HepG2 (cell line): ENCODE measurements at regions of chr1 and their contacts with region 1.

Region 1: GRCh38 chr1:37931361-37932158 is 15.3 kb downstream of the INPP5B start:
- DNase-seq: peak; percentile 95
- ATAC-seq: peak; percentile 99
- H3K4me3 ChIP-seq: peak overlapping the region; percentile 84 to 90 (median 88)
- H3K27ac ChIP-seq: peak overlapping the region; percentile 45
- H3K4me1 ChIP-seq: peaks cover 23% of the 10 kb centered on the region
- H3K27me3 ChIP-seq: no peaks in the 10 kb centered on the region
- CTCF ChIP-seq: no peak
- EP300 ChIP-seq: no peak
- POLR2A ChIP-seq: peak in 1 of 2 experiments; percentile 43; a peak in 1 of 4 replicates
- RAD21 ChIP-seq: no peak

Region 2: GRCh38 chr1:37905727-37906126 is 25.8 kb before region 1 on chr1:
- CTCF ChIA-PET with region 1: no interaction called
- POLR2A ChIA-PET with region 1: no interaction called
- in situ Hi-C with region 1: no loop called
- intact Hi-C with region 1: no loop called
- DNase-seq: no peak
- ATAC-seq: no peak
- H3K4me3 ChIP-seq: no peak overlapping the region
- H3K27ac ChIP-seq: no peak overlapping the region
- H3K4me1 ChIP-seq: no peaks in the 10 kb centered on the region
- H3K27me3 ChIP-seq: no peaks in the 10 kb centered on the region
- CTCF ChIP-seq: no peak
- EP300 ChIP-seq: no peak
- POLR2A ChIP-seq: no peak
- RAD21 ChIP-seq: no peak

Region 3: DNA sequence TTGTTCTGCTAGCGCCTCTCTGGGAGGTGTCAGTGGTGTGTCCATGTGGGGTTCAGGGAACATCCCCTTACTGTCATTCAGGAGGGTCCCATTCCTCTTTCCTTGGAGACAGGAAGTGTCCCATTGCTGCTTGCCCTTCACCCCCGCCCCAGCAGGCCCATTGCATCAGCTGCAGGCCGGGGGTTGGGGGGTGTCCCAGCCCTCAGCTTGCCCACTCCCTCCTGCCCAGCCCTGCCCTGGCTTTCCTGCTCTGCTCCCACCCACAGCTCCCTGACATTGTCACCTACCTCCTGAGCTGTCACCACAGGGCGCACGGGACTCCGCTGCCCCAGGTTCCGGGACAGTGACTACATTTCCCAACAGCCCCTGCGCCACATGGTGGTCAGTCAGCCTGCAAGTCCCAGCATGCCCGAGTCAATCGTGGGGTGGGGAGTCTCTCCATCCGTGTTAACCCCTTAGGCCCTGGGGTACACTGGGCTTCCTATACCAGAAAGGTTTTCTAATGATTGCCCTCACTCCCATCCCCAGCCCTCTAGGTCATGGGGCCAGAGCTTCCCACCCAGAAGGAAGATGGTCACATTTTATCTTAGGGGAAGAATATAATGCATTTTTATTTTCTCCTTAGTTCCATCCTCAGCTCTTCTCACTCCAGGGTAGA is 15.3 kb after region 1 on chr1 and contains the start of gene INPP5B:
- CTCF ChIA-PET with region 1: no interaction called
- POLR2A ChIA-PET with region 1: interaction called, 20 read pairs
- in situ Hi-C with region 1: no loop called
- intact Hi-C with region 1: loop called (anchors 2 kb)
- DNase-seq: peak; percentile 83
- ATAC-seq: peak; percentile 91
- H3K4me3 ChIP-seq: peak within 1 kb of the TSS; percentile 68 to 91 (median 81)
- H3K27ac ChIP-seq: peak within 1 kb of the TSS; percentile 53
- H3K4me1 ChIP-seq: peaks cover 64% of the 10 kb centered on the region
- H3K27me3 ChIP-seq: no peaks in the 10 kb centered on the region; a peak in 1 of 5 replicates
- CTCF ChIP-seq: no peak
- EP300 ChIP-seq: peak in 1 of 2 experiments; percentile 17; a peak in 1 of 4 replicates
- POLR2A ChIP-seq: no peak
- RAD21 ChIP-seq: no peak
- total RNA-seq, gene INPP5B: 9.0 and 9.1 TPM in 2 replicates

Region 4: GRCh38 chr1:38370716-38371504 is 439.4 kb after region 1 on chr1:
- CTCF ChIA-PET with region 1: no interaction called
- POLR2A ChIA-PET with region 1: no interaction called
- in situ Hi-C with region 1: no loop called
- intact Hi-C with region 1: no loop called
- DNase-seq: no peak
- ATAC-seq: no peak
- H3K4me3 ChIP-seq: no peak overlapping the region
- H3K27ac ChIP-seq: no peak overlapping the region
- H3K4me1 ChIP-seq: no peaks in the 10 kb centered on the region
- H3K27me3 ChIP-seq: peaks cover 0 to 8% of the 10 kb centered on the region in 2 experiments; a peak in 1 of 5 replicates
- CTCF ChIP-seq: no peak
- EP300 ChIP-seq: no peak
- POLR2A ChIP-seq: no peak
- RAD21 ChIP-seq: no peak